ENCODE measurements at regions of chr6 and their contacts with region 1.

Region 1: DNA sequence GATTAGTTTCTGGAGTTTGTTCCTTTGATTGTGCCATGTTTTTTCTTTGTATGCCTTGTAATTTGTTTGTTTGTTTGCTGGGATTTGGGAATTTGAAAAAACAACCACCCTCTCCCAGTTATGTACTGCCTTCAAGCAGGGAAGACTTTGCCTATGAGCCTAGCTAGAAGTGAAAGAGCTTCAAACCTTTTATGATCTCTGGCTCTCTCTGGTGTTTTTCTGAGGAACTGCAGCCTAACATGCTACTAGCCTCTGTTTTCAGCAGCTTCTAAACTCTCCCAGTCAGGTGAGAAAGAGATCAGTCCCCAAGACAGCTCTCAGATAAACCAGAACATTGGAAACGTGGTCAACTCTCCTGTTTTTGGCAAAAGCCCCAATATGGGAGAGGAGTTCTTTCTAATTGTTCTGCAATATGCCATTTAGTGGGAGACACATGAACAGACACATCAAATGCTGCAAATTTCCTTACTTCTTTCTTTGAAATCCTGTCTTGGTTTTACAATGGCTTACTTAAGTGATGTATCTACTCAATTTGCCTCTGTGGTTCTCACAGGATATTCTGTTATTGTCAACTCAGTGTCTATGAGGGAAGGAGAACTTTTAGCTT is 58.9 kb upstream of the SERINC1 start:
- DNase-seq: peak in 2 of 10 donors; percentile 18 to 26
- H3K4me3 ChIP-seq: no peak overlapping the region
- H3K27ac ChIP-seq: no peak overlapping the region
- H3K27me3 ChIP-seq: peaks cover 0 to 5% (median 0%) of the 10 kb centered on the region in 45 donors
- CTCF ChIP-seq: peak; percentile 49 to 92 (median 74)

Region 2: GRCh38 chr6:122381497-122382265 is 148.9 kb before region 1 on chr6:
- intact Hi-C with region 1: loop called in 1 of 2 experiments (anchors 2 kb)
- DNase-seq: peak in 7 of 10 donors; percentile 15 to 61 (median 57)
- H3K4me3 ChIP-seq: peak overlapping the region in 3 of 59 donors; percentile 3 to 23 (median 19)
- H3K27ac ChIP-seq: no peak overlapping the region
- H3K27me3 ChIP-seq: no peaks in the 10 kb centered on the region
- CTCF ChIP-seq: peak; percentile 48 to 86 (median 77)

Region 3: DNA sequence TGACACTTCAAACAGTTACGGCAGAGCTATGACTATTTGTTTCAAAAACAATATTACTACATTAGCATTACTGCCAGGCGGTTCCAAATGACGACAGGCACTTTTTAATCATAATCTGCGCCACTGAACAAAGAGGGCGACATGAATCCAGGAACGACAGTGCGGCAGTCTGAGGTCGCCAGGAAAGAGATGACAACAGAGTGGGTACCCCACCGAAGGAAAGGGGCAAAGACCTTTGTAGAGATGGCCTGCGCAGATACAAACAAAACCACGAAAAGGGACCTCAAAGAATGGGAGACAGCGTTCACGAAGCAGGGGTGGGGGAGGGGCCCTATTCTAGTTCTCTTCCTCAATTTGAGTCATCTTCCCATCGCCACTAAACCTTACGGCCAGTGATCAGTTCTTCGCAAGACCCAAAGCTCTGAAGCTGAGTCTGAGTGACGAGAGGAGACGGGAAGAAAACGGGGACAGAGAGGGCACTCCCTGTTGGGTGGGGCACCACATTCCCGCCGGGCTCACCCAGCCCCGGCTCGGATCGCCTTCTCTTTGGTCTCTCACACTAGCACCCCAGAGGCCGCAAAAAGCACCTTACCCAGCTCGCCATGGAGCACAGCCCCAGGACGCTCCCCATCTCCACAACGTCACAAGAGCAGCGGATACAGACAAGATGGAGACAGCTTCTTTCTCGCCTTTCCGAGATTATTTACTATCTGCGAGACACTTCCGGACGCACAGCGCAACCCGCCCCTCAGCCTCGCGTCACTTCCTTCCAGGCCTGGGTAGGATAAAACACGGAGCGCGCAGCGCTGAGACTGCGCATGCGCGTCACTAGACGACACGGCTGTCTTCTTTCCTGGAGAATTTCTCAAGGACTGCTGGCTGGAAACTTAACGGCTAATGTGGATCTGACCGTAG is 59.2 kb before region 1 on chr6 and contains the start of gene SERINC1:
- intact Hi-C with region 1: loop called in 1 of 2 experiments (anchors 5 kb)
- DNase-seq: peak; percentile 93 to 96 (median 95)
- H3K4me3 ChIP-seq: peak within 1 kb of the TSS; percentile 59 to 100 (median 89)
- H3K27ac ChIP-seq: peak within 1 kb of the TSS; percentile 63 to 99 (median 95)
- H3K27me3 ChIP-seq: no peaks in the 10 kb centered on the region
- CTCF ChIP-seq: peak in 25 of 56 donors; percentile 3 to 55 (median 21)
- total RNA-seq, gene SERINC1: 227 to 682 (median 537) TPM

Region 4: GRCh38 chr6:122491919-122492555 is 38.5 kb before region 1 on chr6:
- intact Hi-C with region 1: loop called in 1 of 2 experiments (anchors 5 kb)
- DNase-seq: peak in 9 of 10 donors; percentile 45 to 79 (median 74)
- H3K4me3 ChIP-seq: peak overlapping the region in 2 of 59 donors; percentile 5 to 6
- H3K27ac ChIP-seq: no peak overlapping the region
- H3K27me3 ChIP-seq: no peaks in the 10 kb centered on the region
- CTCF ChIP-seq: peak; percentile 46 to 93 (median 81)